ENCODE measurements at regions of chr5 and their contacts with region 1.

Region 1: DNA sequence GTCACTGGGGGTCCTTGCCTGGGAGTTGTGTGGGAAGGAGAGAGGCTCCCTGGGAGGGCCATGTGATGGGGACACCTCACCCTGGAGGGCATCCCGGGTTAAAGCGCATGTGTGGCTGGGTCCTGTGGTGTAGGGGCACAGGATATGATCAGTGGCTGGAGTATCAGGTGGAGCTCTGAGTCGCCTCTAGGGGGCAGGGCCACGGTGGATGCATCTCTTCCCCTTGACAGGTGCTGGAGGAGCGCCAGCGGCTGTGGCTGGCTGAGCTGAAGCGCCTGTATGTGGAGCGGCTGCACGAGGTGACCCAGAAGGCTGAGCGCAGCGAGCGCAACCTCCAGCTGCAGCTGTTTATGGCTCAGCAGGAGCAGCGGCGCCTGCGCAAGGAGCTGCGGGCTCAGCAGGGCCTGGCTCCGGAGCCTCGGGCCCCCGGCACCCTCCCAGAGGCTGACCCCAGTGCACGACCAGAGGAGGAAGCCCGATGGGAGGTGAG is 7.6 kb downstream of the N4BP3 start:
- DNase-seq: peak; percentile 95
- H3K4me3 ChIP-seq: peak overlapping the region; percentile 18 to 46 (median 38)
- H3K27ac ChIP-seq: peak overlapping the region; percentile 16 to 62 (median 34)
- H3K4me1 ChIP-seq: peaks cover 0 to 36% (median 30%) of the 10 kb centered on the region in 4 donors
- H3K27me3 ChIP-seq: peaks cover 2 to 22% (median 9%) of the 10 kb centered on the region in 3 donors
- CTCF ChIP-seq: peak in 3 of 4 experiments; percentile 14 to 52 (median 15)
- EP300 ChIP-seq: no peak
- POLR2A ChIP-seq: no peak

Region 2: DNA sequence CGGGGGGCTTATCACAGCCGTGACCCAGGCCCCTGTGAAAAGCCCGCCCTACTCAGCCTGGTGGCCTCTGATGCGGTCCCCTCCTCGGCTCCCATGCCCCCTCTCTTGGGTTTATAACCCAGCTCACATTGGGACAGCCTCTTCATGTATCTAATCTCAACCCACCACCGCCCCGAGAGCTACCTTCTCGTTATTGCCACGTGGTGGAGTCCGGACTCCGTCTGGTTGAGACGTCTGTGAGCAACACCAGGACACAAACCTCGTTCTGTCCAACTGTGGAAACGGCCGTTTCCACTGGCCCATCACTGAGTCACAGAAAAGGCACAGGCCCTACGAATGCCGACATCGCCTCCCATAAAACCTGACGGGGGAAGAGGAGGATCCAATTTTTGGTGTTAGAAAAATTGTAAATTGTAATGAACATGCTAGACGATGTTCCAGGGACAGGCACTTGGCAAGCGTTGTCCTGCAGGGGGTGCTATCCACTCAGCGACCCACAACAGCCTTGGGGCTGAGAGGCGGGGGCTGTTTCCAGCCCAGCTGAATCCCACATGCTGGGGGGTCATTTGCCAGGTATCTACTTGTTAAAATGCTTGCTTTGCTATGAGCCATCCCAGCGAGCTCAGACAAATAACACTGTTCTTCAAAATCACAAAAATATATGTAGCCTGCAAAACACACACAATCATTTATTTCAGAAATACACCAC is 44.9 kb before region 1 on chr5:
- intact Hi-C with region 1: loop called (anchors 5 kb)
- DNase-seq: peak; percentile 74
- H3K4me3 ChIP-seq: no peak overlapping the region
- H3K27ac ChIP-seq: no peak overlapping the region
- H3K4me1 ChIP-seq: no peaks in the 10 kb centered on the region
- H3K27me3 ChIP-seq: peaks cover 0 to 25% (median 6%) of the 10 kb centered on the region in 3 donors
- CTCF ChIP-seq: peak; percentile 56 to 83 (median 70)
- EP300 ChIP-seq: no peak
- POLR2A ChIP-seq: no peak

Region 3: GRCh38 chr5:178137991-178138390 is 17.1 kb after region 1 on chr5:
- intact Hi-C with region 1: no loop called
- DNase-seq: no peak
- H3K4me3 ChIP-seq: no peak overlapping the region
- H3K27ac ChIP-seq: no peak overlapping the region
- H3K4me1 ChIP-seq: peaks cover 0 to 7% (median 0%) of the 10 kb centered on the region in 4 donors
- H3K27me3 ChIP-seq: no peaks in the 10 kb centered on the region
- CTCF ChIP-seq: no peak
- EP300 ChIP-seq: no peak
- POLR2A ChIP-seq: no peak

Region 4: GRCh38 chr5:178163772-178164735 is 43.1 kb after region 1 on chr5:
- intact Hi-C with region 1: loop called (anchors 5 kb)
- DNase-seq: peak; percentile 89
- H3K4me3 ChIP-seq: peak overlapping the region in 2 of 4 donors; percentile 12 to 16
- H3K27ac ChIP-seq: no peak overlapping the region
- H3K4me1 ChIP-seq: peaks cover 0 to 9% (median 9%) of the 10 kb centered on the region in 4 donors
- H3K27me3 ChIP-seq: peaks cover 0 to 33% (median 14%) of the 10 kb centered on the region in 3 donors
- CTCF ChIP-seq: peak; percentile 94 to 100 (median 97)
- EP300 ChIP-seq: no peak
- POLR2A ChIP-seq: no peak

Measured in sigmoid colon (tissue), 7 donors.